PC-9 (cell line): ENCODE measurements at regions of chr15 and their contacts with region 1.

Region 1: GRCh38 chr15:95953032-95953431 is 377.5 kb upstream of the NR2F2 start:
- DNase-seq: no peak
- H3K4me3 ChIP-seq: no peak overlapping the region
- H3K27ac ChIP-seq: no peak overlapping the region
- H3K4me1 ChIP-seq: no peaks in the 10 kb centered on the region
- H3K27me3 ChIP-seq: no peaks in the 10 kb centered on the region
- CTCF ChIP-seq: no peak

Region 2: DNA sequence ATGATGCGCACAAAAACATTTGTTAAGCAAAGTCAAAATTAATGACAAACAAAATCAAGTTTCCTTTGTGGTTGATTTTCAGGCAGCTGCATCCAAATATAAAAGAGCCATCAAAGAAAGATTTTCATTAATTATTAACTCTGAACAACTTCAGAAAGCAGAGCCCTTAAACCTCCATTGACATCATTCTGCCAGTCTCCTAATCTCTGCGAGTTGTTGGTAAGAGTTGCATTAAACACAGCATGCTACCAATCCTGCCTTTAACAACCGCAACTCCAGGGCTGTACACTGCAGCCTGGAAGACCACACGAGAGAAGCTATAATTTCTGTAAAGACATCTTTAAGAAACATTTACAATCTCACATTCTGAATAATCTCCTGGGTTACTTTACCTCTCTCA is 582.1 kb after region 1 on chr15:
- CTCF ChIA-PET with region 1: no interaction called
- POLR2A ChIA-PET with region 1: interaction called, 10 read pairs
- intact Hi-C with region 1: no loop called
- DNase-seq: no peak
- H3K4me3 ChIP-seq: no peak overlapping the region
- H3K27ac ChIP-seq: no peak overlapping the region
- H3K4me1 ChIP-seq: no peaks in the 10 kb centered on the region
- H3K27me3 ChIP-seq: peaks cover 12% of the 10 kb centered on the region; the same call in 1 of the 2 replicates
- CTCF ChIP-seq: no peak